Adrenal gland (tissue), 19 donors: ENCODE measurements at regions of chr9 and their contacts with region 1.

Region 1: GRCh38 chr9:91422758-91423711 is 597 bp downstream of the NFIL3 start:
- DNase-seq: peak; percentile 69 to 87 (median 78)
- H3K4me3 ChIP-seq: peak overlapping the region; percentile 36 to 98 (median 61)
- H3K27ac ChIP-seq: peak overlapping the region; percentile 87 to 100 (median 97)
- H3K4me1 ChIP-seq: peaks cover 42% of the 10 kb centered on the region in 2 donors
- H3K27me3 ChIP-seq: no peaks in the 10 kb centered on the region
- CTCF ChIP-seq: peak in 3 of 6 experiments; percentile 19 to 41 (median 36)
- POLR2A ChIP-seq: peak; percentile 41 to 56

Region 2: GRCh38 chr9:91186518-91187108 is 236.4 kb before region 1 on chr9:
- intact Hi-C with region 1: loop called in 1 of 2 experiments (anchors 10 kb)
- DNase-seq: peak in 1 of 7 donors; percentile 47
- H3K4me3 ChIP-seq: no peak overlapping the region
- H3K27ac ChIP-seq: no peak overlapping the region
- H3K4me1 ChIP-seq: no peaks in the 10 kb centered on the region
- H3K27me3 ChIP-seq: no peaks in the 10 kb centered on the region
- CTCF ChIP-seq: no peak
- POLR2A ChIP-seq: no peak

Region 3: GRCh38 chr9:91197232-91198181 is 225.5 kb before region 1 on chr9:
- intact Hi-C with region 1: loop called in 1 of 2 experiments (anchors 5 kb)
- DNase-seq: peak; percentile 90 to 97 (median 95)
- H3K4me3 ChIP-seq: no peak overlapping the region
- H3K27ac ChIP-seq: peak overlapping the region; percentile 73 to 100 (median 99)
- H3K4me1 ChIP-seq: peaks cover 49 to 62% of the 10 kb centered on the region in 2 donors
- H3K27me3 ChIP-seq: no peaks in the 10 kb centered on the region
- CTCF ChIP-seq: peak in 1 of 6 experiments; percentile 4
- POLR2A ChIP-seq: no peak

Region 4: GRCh38 chr9:91298311-91298710 is 124.7 kb before region 1 on chr9:
- intact Hi-C with region 1: no loop called
- DNase-seq: peak in 1 of 7 donors; percentile 22
- H3K4me3 ChIP-seq: no peak overlapping the region
- H3K27ac ChIP-seq: peak overlapping the region in 2 of 5 donors; percentile 35 to 53
- H3K4me1 ChIP-seq: peaks cover 12 to 60% of the 10 kb centered on the region in 2 donors
- H3K27me3 ChIP-seq: no peaks in the 10 kb centered on the region
- CTCF ChIP-seq: no peak
- POLR2A ChIP-seq: no peak

Region 5: DNA sequence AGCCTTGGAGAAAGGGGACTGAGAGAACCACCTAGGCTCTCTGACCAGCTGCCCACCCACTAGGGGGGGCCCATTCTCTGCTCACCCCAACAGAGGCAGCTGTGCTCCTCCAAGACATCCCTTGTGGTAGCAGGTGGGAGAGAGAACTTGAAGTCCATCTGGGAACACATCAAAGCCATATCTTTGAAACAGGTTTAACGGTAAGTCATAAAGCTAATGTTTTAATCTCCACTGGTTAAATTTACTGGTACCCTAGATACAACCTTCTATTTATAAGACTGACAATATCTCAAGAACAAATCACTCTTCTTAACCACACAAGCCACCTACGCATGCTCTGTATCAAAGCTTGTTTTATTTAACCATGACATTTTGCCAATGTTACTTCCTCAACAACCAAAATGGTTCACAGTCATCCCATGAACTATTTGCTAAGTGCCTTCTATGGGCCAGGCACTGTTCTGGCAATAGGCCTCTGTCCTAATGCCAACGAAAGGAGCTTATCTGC is 81.7 kb before region 1 on chr9:
- intact Hi-C with region 1: no loop called
- DNase-seq: no peak
- H3K4me3 ChIP-seq: no peak overlapping the region
- H3K27ac ChIP-seq: peak overlapping the region in 2 of 5 donors; percentile 14 to 42
- H3K4me1 ChIP-seq: peaks cover 0 to 13% of the 10 kb centered on the region in 2 donors
- H3K27me3 ChIP-seq: no peaks in the 10 kb centered on the region
- CTCF ChIP-seq: no peak
- POLR2A ChIP-seq: no peak

Region 6: DNA sequence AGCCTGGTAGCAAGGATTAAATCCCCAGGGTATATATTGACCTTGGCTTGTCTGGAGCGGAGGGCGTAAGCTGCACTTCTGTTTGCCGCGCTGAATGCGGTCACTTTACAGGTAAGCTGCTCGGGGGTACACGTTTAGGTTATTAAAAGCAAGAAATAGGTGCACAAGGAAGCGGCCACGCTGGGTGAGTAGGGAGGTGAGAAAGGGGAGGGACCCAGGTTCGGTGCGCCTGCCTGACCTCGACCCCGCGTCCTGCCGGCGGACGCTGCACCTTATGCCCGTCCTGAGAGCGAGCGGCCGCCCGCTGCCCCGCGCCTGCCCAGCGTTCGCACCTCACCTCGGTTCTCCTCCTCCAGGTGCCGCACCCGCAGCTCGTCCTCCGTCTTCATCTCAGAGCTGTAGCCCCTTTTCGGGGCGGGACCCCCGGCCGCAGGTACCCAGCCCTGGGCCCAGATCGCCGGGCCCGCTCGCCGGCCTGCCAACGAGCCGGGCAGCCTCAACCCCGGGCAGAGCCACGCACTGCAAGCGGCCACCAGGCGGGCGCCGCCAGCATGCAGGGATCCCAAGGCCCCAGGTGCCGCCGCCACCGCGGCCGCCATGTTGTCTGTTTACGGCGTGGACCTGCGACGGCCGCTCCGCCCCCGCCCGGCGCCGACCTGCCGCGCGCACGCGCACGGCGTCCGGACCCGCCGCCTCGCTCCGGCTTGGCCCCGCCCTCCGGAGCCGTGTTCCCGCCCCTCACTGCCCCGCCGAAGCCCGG is 61.6 kb before region 1 on chr9 and contains the start of gene AUH:
- intact Hi-C with region 1: loop called in 1 of 2 experiments (anchors 10 kb)
- DNase-seq: peak; percentile 82 to 90 (median 86)
- H3K4me3 ChIP-seq: peak within 1 kb of the TSS; percentile 43 to 100 (median 92)
- H3K27ac ChIP-seq: peak within 1 kb of the TSS; percentile 74 to 92 (median 86)
- H3K4me1 ChIP-seq: peaks cover 10 to 33% of the 10 kb centered on the region in 2 donors
- H3K27me3 ChIP-seq: no peaks in the 10 kb centered on the region
- CTCF ChIP-seq: peak in 2 of 6 experiments; percentile 12 to 28
- POLR2A ChIP-seq: peak; percentile 47 to 82
- total RNA-seq, gene AUH: 45.0 to 158 (median 78.1) TPM